Gastrocnemius medialis (tissue), 4 donors: ENCODE measurements at regions of chr3 and their contacts with region 1.

Region 1: GRCh38 chr3:50611464-50612233 is at the start of gene CISH:
- DNase-seq: peak; percentile 90 to 94
- ATAC-seq: peak; percentile 60 to 64
- H3K4me3 ChIP-seq: peak within 1 kb of the TSS; percentile 65 to 89 (median 77)
- H3K27ac ChIP-seq: peak within 1 kb of the TSS; percentile 95 to 99 (median 96)
- H3K4me1 ChIP-seq: peaks cover 54 to 62% of the 10 kb centered on the region in 2 donors
- H3K27me3 ChIP-seq: no peaks in the 10 kb centered on the region
- CTCF ChIP-seq: peak in 3 of 5 experiments; percentile 18 to 61 (median 28)
- POLR2A ChIP-seq: peak; percentile 94 to 96
- total RNA-seq, gene CISH: 3.3 to 50.5 (median 20.3) TPM

Region 2: GRCh38 chr3:50358911-50359759 is 252.5 kb before region 1 on chr3 and contains the start of gene TMEM115:
- in situ Hi-C with region 1: no loop called
- intact Hi-C with region 1: loop called (anchors 5 kb)
- DNase-seq: peak; percentile 99
- ATAC-seq: peak; percentile 97 to 99
- H3K4me3 ChIP-seq: peak within 1 kb of the TSS; percentile 79 to 99 (median 82)
- H3K27ac ChIP-seq: peak within 1 kb of the TSS; percentile 93 to 97 (median 94)
- H3K4me1 ChIP-seq: peaks cover 40 to 43% of the 10 kb centered on the region in 2 donors
- H3K27me3 ChIP-seq: no peaks in the 10 kb centered on the region
- CTCF ChIP-seq: no peak
- POLR2A ChIP-seq: peak; percentile 75 to 79
- total RNA-seq, gene TMEM115: 26.9 to 57.8 (median 42.3) TPM

Region 3: DNA sequence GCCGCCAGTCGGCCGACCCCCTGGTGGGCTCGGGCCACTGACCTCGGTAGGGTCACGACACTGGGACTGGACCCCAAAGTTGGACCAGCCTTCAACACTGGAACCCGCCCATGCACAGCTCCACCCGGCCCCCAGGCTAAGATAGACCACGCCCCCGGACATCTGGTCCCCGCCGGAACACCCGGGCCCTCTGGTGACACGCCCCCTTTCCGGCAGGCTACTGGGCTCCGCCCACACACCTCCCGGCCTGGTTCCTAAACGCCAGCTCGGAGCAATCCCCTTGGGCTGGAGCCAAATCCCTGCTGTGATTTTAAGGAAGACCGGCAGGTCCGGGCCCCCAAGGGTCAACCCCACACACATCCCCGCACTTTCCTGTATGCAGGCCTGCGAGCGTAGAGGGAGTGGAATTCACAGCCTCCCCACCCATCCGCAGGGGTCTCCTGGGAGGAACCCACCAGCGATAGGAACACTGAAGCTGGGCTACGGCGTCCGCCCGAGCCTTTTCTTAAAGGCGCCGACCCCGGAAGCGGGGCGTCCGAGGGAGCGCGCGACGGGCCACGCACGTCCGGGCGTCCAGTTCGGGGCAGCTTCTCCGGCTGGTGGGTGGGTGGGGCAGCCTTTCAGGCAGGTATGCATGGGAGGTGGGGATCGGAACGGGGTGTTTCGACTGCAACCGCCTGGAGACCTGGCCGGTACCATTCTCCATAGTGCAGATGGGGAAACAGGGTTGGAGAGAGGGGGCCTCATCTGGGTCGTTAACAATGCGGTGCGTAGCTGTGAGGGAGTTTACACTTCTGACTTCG is 42.5 kb before region 1 on chr3 and contains the start of gene HEMK1:
- in situ Hi-C with region 1: loop called in 3 of 4 experiments (anchors 5 kb)
- intact Hi-C with region 1: loop called (anchors 1 kb)
- DNase-seq: peak; percentile 97
- ATAC-seq: peak; percentile 77 to 78
- H3K4me3 ChIP-seq: peak within 1 kb of the TSS; percentile 81 to 92 (median 86)
- H3K27ac ChIP-seq: peak within 1 kb of the TSS; percentile 88 to 97 (median 92)
- H3K4me1 ChIP-seq: peaks cover 39 to 46% of the 10 kb centered on the region in 2 donors
- H3K27me3 ChIP-seq: no peaks in the 10 kb centered on the region
- CTCF ChIP-seq: peak in 3 of 5 experiments; percentile 11 to 20 (median 11)
- POLR2A ChIP-seq: peak; percentile 73 to 78
- total RNA-seq, gene HEMK1: 4.5 to 8.1 (median 7.5) TPM

Region 4: GRCh38 chr3:50652709-50653108 is 41.1 kb after region 1 on chr3:
- in situ Hi-C with region 1: no loop called
- intact Hi-C with region 1: loop called (anchors 1 kb)
- DNase-seq: peak; percentile 33 to 75
- ATAC-seq: peak; percentile 42 to 60
- H3K4me3 ChIP-seq: no peak overlapping the region
- H3K27ac ChIP-seq: peak overlapping the region; percentile 54 to 74 (median 69)
- H3K4me1 ChIP-seq: peaks cover 27 to 32% of the 10 kb centered on the region in 2 donors
- H3K27me3 ChIP-seq: no peaks in the 10 kb centered on the region
- CTCF ChIP-seq: peak; percentile 42 to 83 (median 71)
- POLR2A ChIP-seq: no peak

Region 5: DNA sequence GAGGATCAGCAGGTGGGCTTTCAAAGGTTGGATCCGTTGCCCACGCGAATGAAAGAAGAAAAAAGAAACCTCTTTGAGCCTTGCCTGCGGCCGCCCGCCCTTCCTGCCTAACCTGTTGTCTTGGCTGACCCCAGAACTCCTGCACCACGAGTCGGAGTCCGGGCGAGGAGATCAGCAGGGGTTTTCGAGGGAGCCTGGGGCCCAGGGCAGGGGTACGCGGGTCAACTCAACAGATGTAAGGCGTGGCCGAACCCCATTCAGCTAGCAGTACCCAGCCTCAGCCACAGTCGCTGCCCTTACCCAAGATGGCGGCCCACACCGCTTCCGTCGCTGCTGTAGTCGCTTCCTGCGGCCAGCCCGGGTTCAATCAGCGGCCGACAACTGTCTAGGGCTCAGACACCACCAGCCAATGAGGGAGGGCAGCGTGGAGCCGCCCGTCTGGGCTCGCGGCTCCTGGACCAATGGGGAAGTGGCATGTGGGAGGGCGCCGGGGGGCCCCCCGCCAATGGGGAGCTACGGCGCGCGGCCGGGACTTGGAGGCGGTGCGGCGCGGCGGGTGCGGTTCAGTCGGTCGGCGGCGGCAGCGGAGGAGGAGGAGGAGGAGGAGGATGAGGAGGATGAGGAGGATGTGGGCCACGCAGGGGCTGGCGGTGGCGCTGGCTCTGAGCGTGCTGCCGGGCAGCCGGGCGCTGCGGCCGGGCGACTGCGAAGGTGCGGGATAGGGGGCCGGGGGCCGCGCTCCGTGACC is 773.3 kb after region 1 on chr3 and contains the start of gene MANF:
- in situ Hi-C with region 1: loop called in 1 of 4 experiments (anchors 25 kb)
- intact Hi-C with region 1: loop called (anchors 2 kb)
- DNase-seq: peak; percentile 98
- ATAC-seq: peak; percentile 96 to 97
- H3K4me3 ChIP-seq: peak within 1 kb of the TSS; percentile 73 to 96 (median 94)
- H3K27ac ChIP-seq: peak within 1 kb of the TSS; percentile 91 to 98 (median 92)
- H3K4me1 ChIP-seq: peaks cover 25 to 28% of the 10 kb centered on the region in 2 donors
- H3K27me3 ChIP-seq: no peaks in the 10 kb centered on the region
- CTCF ChIP-seq: peak in 3 of 5 experiments; percentile 14 to 24 (median 20)
- POLR2A ChIP-seq: peak; percentile 88 to 95
- total RNA-seq, gene MANF: 4.4 to 19.7 (median 11.5) TPM

Region 6: DNA sequence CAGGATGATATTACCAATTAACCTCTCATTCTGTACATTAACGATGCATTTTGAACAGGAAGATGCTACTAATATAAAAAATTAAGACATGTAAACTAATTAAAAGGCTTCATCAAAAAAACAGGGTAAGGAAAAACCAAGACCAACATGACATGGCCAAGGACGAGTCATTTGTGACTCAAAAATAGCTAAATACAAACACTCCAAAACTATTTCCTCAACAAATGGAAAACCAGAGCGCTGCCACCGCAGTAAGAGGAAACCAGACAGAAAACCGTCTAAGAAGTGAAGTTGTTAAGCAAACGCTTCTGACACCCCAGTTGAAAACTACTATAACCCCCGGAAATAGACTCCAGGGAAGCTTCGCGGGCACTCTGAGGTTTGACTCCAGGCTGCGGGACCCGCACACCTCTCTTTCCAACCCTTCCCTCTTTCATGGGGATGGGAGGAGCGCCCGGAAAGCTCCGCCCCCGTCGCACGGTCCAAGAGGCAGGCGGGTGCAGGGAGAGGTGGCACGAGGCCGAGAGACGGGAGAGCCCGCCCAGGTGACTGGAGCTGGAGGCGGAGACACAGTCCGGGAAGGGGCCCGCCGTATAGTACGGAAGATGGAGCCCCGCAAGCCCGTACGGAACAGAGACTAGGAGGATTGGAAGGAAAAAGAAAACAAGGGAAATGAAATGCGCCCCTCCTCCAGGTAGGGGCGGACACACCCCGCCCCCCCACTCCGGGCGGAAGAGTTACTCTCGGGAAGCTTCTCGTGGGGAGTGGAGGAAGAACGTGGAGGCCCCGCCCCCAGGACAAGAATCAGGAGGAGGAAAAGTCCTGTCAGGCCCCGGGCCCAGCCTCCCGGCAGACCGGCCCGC is 887.5 kb after region 1 on chr3:
- in situ Hi-C with region 1: loop called in 1 of 4 experiments (anchors 10 kb)
- intact Hi-C with region 1: no loop called
- DNase-seq: peak; percentile 89 to 93
- ATAC-seq: peak; percentile 77 to 78
- H3K4me3 ChIP-seq: peak overlapping the region; percentile 73 to 85 (median 76)
- H3K27ac ChIP-seq: peak overlapping the region; percentile 93 to 98 (median 96)
- H3K4me1 ChIP-seq: peaks cover 9% of the 10 kb centered on the region in 2 donors
- H3K27me3 ChIP-seq: no peaks in the 10 kb centered on the region
- CTCF ChIP-seq: no peak
- POLR2A ChIP-seq: peak; percentile 70